ENCODE measurements at regions of chr1 and their contacts with region 1.

Region 1: GRCh38 chr1:212256369-212256768 is 28.8 kb upstream of the PPP2R5A start:
- DNase-seq: no peak
- ATAC-seq: 0 out of 3 replicates have a peak, but pooled peaks have one; percentile 17
- H3K4me3 ChIP-seq: no peak overlapping the region
- H3K27ac ChIP-seq: no peak overlapping the region
- H3K4me1 ChIP-seq: peaks cover 1 to 21% of the 10 kb centered on the region in 2 experiments; a peak in 4 of 5 replicates
- H3K27me3 ChIP-seq: no peaks in the 10 kb centered on the region
- CTCF ChIP-seq: no peak
- EP300 ChIP-seq: no peak
- POLR2A ChIP-seq: no peak
- RAD21 ChIP-seq: no peak

Region 2: DNA sequence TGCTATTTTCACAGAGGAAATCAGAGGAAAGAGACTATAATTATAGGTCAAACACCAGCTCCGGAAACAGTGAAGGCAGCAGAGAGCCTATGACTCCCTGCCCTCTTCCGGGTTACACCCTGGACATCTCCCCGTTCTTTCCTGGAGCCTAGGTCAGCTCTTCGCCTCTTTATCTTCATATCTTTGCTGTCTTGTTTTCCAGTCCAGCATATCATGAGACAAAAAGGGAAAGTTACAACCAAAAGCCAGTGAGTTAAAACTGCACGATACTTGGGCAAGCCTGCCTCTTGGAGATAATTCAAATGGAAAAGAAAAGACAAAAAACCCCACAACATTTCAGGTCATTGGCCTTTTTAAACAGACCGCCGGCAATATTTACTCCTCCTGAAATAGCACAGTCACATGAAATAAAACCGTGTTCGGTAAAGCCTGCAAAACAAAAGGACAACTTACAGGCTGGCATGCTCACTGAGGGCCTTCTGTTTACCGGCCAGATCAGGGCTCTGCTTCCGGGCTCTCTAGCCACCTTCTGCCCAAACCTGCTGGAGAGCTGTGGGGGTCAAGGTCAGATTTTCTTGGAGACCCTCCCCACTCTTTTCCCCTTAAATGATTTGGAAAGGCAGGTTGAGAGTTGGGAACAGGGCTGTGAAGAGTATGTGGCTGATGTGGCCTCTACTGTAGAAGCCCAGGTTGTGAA is 13.9 kb before region 1 on chr1:
- CTCF ChIA-PET with region 1: no interaction called
- POLR2A ChIA-PET with region 1: interaction called, 16 read pairs
- in situ Hi-C with region 1: no loop called
- intact Hi-C with region 1: no loop called
- DNase-seq: peak; percentile 71 to 93 (median 83)
- ATAC-seq: peak; percentile 88
- H3K4me3 ChIP-seq: peak overlapping the region; percentile 3; the same call in 1 of the 2 replicates
- H3K27ac ChIP-seq: peak overlapping the region; percentile 89
- H3K4me1 ChIP-seq: peaks cover 12 to 61% of the 10 kb centered on the region in 2 experiments
- H3K27me3 ChIP-seq: no peaks in the 10 kb centered on the region
- CTCF ChIP-seq: peak in 1 of 3 experiments; percentile 19; a peak in 2 of 6 replicates
- EP300 ChIP-seq: peak; percentile 81
- POLR2A ChIP-seq: peak; percentile 61
- RAD21 ChIP-seq: peak in 1 of 2 experiments; percentile 12; a peak in 3 of 4 replicates

Region 3: GRCh38 chr1:212271823-212272485 is 15.6 kb after region 1 on chr1:
- CTCF ChIA-PET with region 1: no interaction called
- POLR2A ChIA-PET with region 1: interaction called, 10 read pairs
- in situ Hi-C with region 1: no loop called
- intact Hi-C with region 1: no loop called
- DNase-seq: no peak
- ATAC-seq: peak; percentile 15; the same call in 1 of the 3 replicates
- H3K4me3 ChIP-seq: no peak overlapping the region
- H3K27ac ChIP-seq: no peak overlapping the region
- H3K4me1 ChIP-seq: no peaks in the 10 kb centered on the region
- H3K27me3 ChIP-seq: no peaks in the 10 kb centered on the region
- CTCF ChIP-seq: no peak
- EP300 ChIP-seq: no peak
- POLR2A ChIP-seq: no peak
- RAD21 ChIP-seq: no peak

Measured in K562 (cell line).